Activated T-helper 1 cell treated with anti-CD3 and anti-CD28 coated beads, Interleukin-12 subunit alpha, Interleukin-12 subunit beta, Interleukin-2, Interleukin-4 antibody, amounts not matched to agents 30 ng/mL and 10 ng/mL and 1 ng/mL, durations not matched to agents 14 hours and 24 hours and 36 hours (primary cell): ENCODE measurements at regions of chr3 and their contacts with region 1.

Region 1: GRCh38 chr3:33636125-33636850 is 81.8 kb downstream of the CLASP2 start:
- DNase-seq: no peak
- H3K4me3 Mint-ChIP-seq: no peak overlapping the region
- H3K27ac Mint-ChIP-seq: no peak overlapping the region
- H3K4me1 Mint-ChIP-seq: peaks cover 6% of the 10 kb centered on the region
- H3K27me3 Mint-ChIP-seq: no peaks in the 10 kb centered on the region

Region 2: DNA sequence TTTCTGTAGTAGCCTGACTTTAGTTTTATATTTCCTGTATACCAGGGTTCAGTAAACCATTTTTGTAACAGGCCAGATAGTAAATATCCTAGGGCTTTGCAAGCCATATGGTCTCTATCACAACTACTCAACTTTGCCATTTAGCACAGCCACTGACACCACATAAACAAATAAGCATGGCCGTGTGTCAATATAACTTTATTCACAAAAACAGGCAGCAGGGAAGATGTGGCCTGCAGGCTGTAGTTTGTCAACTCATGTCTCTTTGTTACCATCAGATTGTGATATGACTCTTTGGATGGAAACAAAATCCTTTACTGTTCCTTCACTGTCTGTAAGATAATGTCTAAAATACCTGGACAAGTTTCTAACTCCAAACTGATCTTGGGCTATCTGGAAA is 72.8 kb before region 1 on chr3:
- intact Hi-C with region 1: no loop called
- DNase-seq: no peak
- H3K4me3 Mint-ChIP-seq: no peak overlapping the region
- H3K27ac Mint-ChIP-seq: no peak overlapping the region
- H3K4me1 Mint-ChIP-seq: no peaks in the 10 kb centered on the region
- H3K27me3 Mint-ChIP-seq: no peaks in the 10 kb centered on the region

Region 3: DNA sequence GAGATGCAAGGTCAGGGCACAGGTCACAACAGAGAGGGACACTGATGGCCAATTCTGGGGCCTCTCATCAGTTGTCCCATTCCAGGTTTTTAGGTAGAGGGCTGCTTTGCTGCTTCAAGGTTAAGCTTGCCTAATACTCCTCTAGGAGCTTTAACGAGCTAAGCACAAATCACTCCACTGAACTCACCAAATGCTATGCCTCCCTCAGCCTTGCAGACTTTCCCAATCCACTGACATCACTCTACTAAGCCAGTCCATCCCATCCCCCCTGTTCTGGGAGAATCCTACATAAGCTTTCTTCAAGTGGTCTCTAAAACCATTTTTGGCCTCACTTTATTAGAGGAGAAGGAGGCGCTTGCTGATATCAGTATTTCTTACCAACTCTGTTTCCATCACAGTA is 137.3 kb after region 1 on chr3:
- intact Hi-C with region 1: loop called (anchors 1 kb)
- DNase-seq: no peak
- H3K4me3 Mint-ChIP-seq: no peak overlapping the region
- H3K27ac Mint-ChIP-seq: no peak overlapping the region
- H3K4me1 Mint-ChIP-seq: no peaks in the 10 kb centered on the region
- H3K27me3 Mint-ChIP-seq: peaks cover 2% of the 10 kb centered on the region